Endothelial cell of umbilical vein (primary cell): ENCODE measurements at regions of chr9 and their contacts with region 1.

Region 1: DNA sequence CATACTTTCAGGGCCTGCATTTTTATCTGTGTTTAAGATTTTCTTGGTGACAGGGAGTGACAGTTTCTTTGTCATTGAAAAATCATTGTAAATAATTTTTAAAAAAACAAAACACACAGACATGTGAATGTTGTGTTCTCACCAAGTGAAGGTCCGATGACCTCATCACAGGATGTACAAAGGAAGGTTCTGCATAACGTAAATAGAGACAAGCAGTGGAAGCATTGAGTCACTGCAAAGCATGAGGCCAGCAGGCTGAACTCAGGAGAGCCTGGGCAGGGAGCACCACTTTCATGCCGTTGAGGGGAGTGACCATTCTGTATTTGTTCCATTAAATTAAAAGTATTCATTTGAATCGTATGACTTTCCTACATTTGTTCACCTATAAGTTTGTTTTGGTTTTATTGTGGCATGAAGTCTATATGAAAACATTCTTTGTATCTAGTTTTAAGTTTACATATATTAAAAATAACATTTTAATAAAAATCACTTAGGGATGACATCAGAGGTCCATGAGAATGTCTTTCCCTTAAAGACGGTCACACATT is 70.4 kb upstream of the TLE1 start:
- DNase-seq: peak; percentile 95
- H3K4me3 ChIP-seq: no peak overlapping the region
- H3K27ac ChIP-seq: peak overlapping the region; percentile 91
- H3K4me1 ChIP-seq: peaks cover 11% of the 10 kb centered on the region
- H3K27me3 ChIP-seq: no peaks in the 10 kb centered on the region
- CTCF ChIP-seq: no peak
- POLR2A ChIP-seq: no peak

Region 2: GRCh38 chr9:81671880-81672280 is 87.9 kb before region 1 on chr9:
- CTCF ChIA-PET with region 1: no interaction called
- POLR2A ChIA-PET with region 1: no interaction called
- dilution Hi-C with region 1: no loop called
- intact Hi-C with region 1: no loop called
- DNase-seq: peak; percentile 69
- H3K4me3 ChIP-seq: no peak overlapping the region
- H3K27ac ChIP-seq: no peak overlapping the region
- H3K4me1 ChIP-seq: peaks cover 7% of the 10 kb centered on the region
- H3K27me3 ChIP-seq: no peaks in the 10 kb centered on the region
- CTCF ChIP-seq: no peak
- POLR2A ChIP-seq: no peak

Region 3: DNA sequence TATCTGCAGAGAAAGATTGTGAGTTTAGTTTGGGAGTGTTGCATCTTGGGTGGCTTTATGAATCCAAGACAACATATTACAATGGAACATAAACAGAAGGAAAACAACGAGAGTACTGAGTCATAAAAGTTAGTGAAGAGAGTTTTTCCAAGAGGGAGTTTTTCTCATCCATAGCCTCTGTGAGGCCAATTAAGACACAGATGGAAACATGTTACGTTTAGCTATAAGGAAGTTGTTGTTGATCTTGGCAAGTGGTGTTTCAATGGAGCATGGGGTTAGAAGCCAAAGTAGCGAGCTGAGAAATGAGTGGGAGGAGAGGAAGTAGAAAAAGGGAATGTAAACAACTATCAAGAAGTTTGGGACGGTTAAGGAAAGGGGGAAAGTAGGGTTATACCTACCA is 115.2 kb after region 1 on chr9:
- CTCF ChIA-PET with region 1: no interaction called
- POLR2A ChIA-PET with region 1: no interaction called
- dilution Hi-C with region 1: no loop called
- intact Hi-C with region 1: loop called (anchors 1 kb)
- DNase-seq: peak; percentile 97
- H3K4me3 ChIP-seq: no peak overlapping the region
- H3K27ac ChIP-seq: peak overlapping the region; percentile 95
- H3K4me1 ChIP-seq: peaks cover 38% of the 10 kb centered on the region
- H3K27me3 ChIP-seq: no peaks in the 10 kb centered on the region
- CTCF ChIP-seq: no peak
- POLR2A ChIP-seq: no peak